ENCODE measurements at regions of chr1 and their contacts with region 1.

Region 1: DNA sequence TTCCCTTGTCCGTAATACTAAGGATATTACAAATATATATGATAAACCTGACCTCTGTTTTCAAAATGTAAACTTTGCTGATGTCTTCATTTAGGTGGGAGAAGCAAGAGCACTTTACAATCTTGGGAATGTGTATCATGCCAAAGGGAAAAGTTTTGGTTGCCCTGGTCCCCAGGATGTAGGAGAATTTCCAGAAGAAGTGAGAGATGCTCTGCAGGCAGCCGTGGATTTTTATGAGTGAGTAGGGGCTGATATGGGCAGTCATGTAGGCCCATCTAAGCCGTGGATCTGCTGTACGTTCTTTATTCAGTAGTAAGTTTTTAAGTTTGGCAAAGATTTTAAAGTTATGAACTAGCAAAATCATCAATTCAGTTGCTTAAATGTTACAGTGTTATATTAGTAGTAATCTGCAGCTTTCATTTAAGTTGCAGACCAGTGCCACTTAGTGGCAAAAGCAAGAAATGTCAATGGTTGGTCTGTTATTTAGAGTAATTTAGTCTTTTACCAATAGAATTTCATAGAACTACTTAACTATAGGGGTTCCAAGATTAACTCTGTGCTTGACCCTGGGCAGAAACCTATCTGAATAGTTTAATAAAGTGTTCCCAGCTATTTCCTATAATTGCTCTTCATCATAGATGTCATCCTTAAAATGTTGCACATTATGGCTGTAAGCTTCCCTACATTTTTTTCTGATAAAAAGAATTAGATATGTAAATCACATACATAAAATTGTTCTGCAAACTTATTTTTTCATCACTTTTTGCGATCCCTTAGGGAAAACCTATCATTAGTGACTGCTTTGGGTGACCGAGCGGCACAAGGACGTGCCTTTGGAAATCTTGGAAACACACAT is 21.3 kb downstream of the GPSM2 start:
- DNase-seq: peak; percentile 44
- H3K4me3 ChIP-seq: peak overlapping the region in 1 of 2 experiments; percentile 5; a peak in 1 of 4 replicates
- H3K27ac ChIP-seq: peak overlapping the region in 1 of 2 experiments; percentile 20; a peak in 1 of 4 replicates
- H3K4me1 ChIP-seq: peaks cover 0 to 2% of the 10 kb centered on the region in 2 experiments; a peak in 3 of 4 replicates
- H3K27me3 ChIP-seq: no peaks in the 10 kb centered on the region
- CTCF ChIP-seq: peak; percentile 83
- EP300 ChIP-seq: no peak
- RAD21 ChIP-seq: peak; percentile 91

Region 2: GRCh38 chr1:108691942-108692723 is 206.0 kb before region 1 on chr1 and contains the start of gene PRPF38B:
- CTCF ChIA-PET with region 1: interaction called, 27 read pairs
- POLR2A ChIA-PET with region 1: interaction called, 5 read pairs
- DNase-seq: peak; percentile 93
- H3K4me3 ChIP-seq: peak within 1 kb of the TSS; percentile 97 to 98
- H3K27ac ChIP-seq: peak within 1 kb of the TSS; percentile 96 to 99
- H3K4me1 ChIP-seq: peaks cover 11 to 16% of the 10 kb centered on the region in 2 experiments; a peak in 3 of 4 replicates
- H3K27me3 ChIP-seq: no peaks in the 10 kb centered on the region
- CTCF ChIP-seq: no peak
- EP300 ChIP-seq: no peak
- RAD21 ChIP-seq: no peak; the same call in 1 of the 2 replicates
- polyA plus RNA-seq, gene PRPF38B: 17.5 and 22.3 TPM in 2 replicates

Region 3: DNA sequence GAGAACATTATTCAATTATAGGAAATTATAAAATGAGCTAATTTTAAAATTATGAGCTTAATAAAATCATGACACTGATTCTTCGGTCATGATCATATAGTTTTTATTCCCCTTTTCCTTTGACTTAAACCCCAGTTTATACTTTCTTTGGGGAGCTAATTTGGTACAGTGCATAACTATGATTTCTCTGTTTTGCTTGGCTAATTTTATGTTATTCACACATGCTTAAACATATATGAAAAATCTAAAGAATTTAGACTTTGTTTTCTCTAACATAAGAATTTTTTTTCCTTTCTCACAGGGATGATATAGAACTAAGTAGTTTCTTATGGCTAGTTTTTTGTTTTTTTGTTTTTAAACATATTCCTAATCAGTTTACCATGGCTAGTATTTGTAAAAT is 99.1 kb before region 1 on chr1:
- CTCF ChIA-PET with region 1: interaction called, 10 read pairs
- POLR2A ChIA-PET with region 1: no interaction called
- DNase-seq: no peak
- H3K4me3 ChIP-seq: no peak overlapping the region
- H3K27ac ChIP-seq: no peak overlapping the region
- H3K4me1 ChIP-seq: no peaks in the 10 kb centered on the region
- H3K27me3 ChIP-seq: no peaks in the 10 kb centered on the region
- CTCF ChIP-seq: no peak
- EP300 ChIP-seq: no peak
- RAD21 ChIP-seq: no peak

Region 4: DNA sequence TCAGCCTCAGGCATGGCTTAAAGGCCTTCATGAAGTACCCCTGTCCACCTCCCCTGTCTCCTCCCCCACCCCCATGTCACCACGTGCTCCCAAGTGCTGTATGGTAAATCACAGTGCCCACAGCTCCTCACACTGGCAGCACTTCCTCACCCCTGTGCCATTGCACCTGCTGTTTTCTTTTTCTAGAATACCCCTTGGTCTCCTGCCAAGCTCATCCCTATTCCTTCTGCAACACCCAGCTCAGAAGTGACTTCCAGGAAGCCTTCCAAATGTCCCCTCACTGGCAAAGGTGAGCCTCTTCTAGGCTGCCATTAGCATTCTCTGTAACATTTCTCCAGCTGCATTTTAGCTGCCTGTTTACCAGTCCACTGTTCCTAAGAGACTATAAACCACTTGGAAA is 50.6 kb before region 1 on chr1:
- CTCF ChIA-PET with region 1: interaction called, 10 read pairs
- POLR2A ChIA-PET with region 1: no interaction called
- DNase-seq: no peak
- H3K4me3 ChIP-seq: no peak overlapping the region
- H3K27ac ChIP-seq: no peak overlapping the region
- H3K4me1 ChIP-seq: peaks cover 0 to 1% of the 10 kb centered on the region in 2 experiments; a peak in 1 of 4 replicates
- H3K27me3 ChIP-seq: no peaks in the 10 kb centered on the region
- CTCF ChIP-seq: no peak
- EP300 ChIP-seq: no peak
- RAD21 ChIP-seq: no peak

Region 5: GRCh38 chr1:109011335-109011734 is 113.2 kb after region 1 on chr1:
- CTCF ChIA-PET with region 1: no interaction called
- POLR2A ChIA-PET with region 1: no interaction called
- DNase-seq: no peak
- H3K4me3 ChIP-seq: no peak overlapping the region
- H3K27ac ChIP-seq: no peak overlapping the region
- H3K4me1 ChIP-seq: no peaks in the 10 kb centered on the region
- H3K27me3 ChIP-seq: no peaks in the 10 kb centered on the region
- CTCF ChIP-seq: no peak
- EP300 ChIP-seq: no peak
- RAD21 ChIP-seq: no peak

Measured in SK-N-SH (cell line).